HCT116 (cell line): ENCODE measurements at regions of chrX and their contacts with region 1.

Region 1: GRCh38 chrX:135185795-135186443 is 14.7 kb upstream of the CT55 start:
- DNase-seq: peak; percentile 42
- ATAC-seq: peak; percentile 99
- H3K4me3 ChIP-seq: no peak overlapping the region
- H3K27ac ChIP-seq: no peak overlapping the region
- H3K4me1 ChIP-seq: no peaks in the 10 kb centered on the region
- H3K27me3 ChIP-seq: no peaks in the 10 kb centered on the region
- CTCF ChIP-seq: peak; percentile 47 to 58 (median 56); a peak in 5 of 6 replicates
- POLR2A ChIP-seq: no peak
- RAD21 ChIP-seq: peak; percentile 76

Region 2: DNA sequence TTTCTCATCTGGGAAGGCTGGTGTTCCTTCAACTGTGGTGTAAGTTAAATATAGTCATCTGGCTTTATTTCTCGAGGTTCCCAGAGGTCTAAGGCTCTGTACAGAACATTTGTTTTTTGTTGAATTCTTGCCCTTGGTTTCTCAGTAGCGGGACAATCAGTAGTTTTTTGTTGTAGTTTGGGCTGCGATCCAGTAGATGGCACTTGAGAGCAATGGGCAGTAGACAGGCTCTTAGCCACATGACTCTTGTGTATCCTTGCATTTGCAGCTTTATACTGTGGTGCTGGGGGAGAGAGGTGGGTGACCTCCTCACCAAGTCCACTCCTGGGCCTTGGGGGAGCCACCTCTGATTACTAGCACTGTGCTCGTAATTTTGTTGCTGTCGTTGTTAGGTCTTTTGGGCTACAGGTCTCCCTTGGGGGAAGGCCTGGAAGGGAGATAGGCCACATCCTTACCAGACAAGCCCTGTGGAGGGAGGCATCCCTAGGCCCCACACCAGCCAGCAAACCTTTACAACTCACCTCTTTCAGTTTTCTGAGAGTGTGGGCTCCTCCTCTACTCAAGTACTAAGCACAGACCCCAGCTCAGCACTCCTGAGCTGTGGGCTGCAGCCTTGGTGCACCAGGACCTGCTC is 73.7 kb before region 1 on chrX:
- CTCF ChIA-PET with region 1: interaction called, 19 read pairs
- POLR2A ChIA-PET with region 1: no interaction called
- RAD21 ChIA-PET with region 1: interaction called in 1 of 2 experiments, 4 read pairs
- intact Hi-C with region 1: loop called (anchors 1 kb)
- DNase-seq: peak; percentile 32
- ATAC-seq: peak; percentile 90
- H3K4me3 ChIP-seq: no peak overlapping the region
- H3K27ac ChIP-seq: no peak overlapping the region
- H3K4me1 ChIP-seq: no peaks in the 10 kb centered on the region
- H3K27me3 ChIP-seq: 0 out of 2 replicates have a peak, but pooled peaks cover 3% of the 10 kb centered on the region
- CTCF ChIP-seq: peak; percentile 40 to 57 (median 57); a peak in 5 of 6 replicates
- POLR2A ChIP-seq: no peak
- RAD21 ChIP-seq: peak; percentile 55

Region 3: GRCh38 chrX:135923353-135923752 is 737.4 kb after region 1 on chrX:
- CTCF ChIA-PET with region 1: no interaction called
- POLR2A ChIA-PET with region 1: no interaction called
- RAD21 ChIA-PET with region 1: no interaction called
- intact Hi-C with region 1: no loop called
- DNase-seq: peak; percentile 7
- ATAC-seq: peak; percentile 70
- H3K4me3 ChIP-seq: no peak overlapping the region
- H3K27ac ChIP-seq: no peak overlapping the region
- H3K4me1 ChIP-seq: no peaks in the 10 kb centered on the region
- H3K27me3 ChIP-seq: no peaks in the 10 kb centered on the region
- CTCF ChIP-seq: peak; percentile 31 to 49 (median 45); a peak in 5 of 6 replicates
- POLR2A ChIP-seq: no peak
- RAD21 ChIP-seq: peak; percentile 37